Activated naive CD4-positive, alpha-beta T cell treated with anti-CD3 and anti-CD28 coated beads for 36 hours (primary cell): ENCODE measurements at regions of chr17 and their contacts with region 1.

Region 1: DNA sequence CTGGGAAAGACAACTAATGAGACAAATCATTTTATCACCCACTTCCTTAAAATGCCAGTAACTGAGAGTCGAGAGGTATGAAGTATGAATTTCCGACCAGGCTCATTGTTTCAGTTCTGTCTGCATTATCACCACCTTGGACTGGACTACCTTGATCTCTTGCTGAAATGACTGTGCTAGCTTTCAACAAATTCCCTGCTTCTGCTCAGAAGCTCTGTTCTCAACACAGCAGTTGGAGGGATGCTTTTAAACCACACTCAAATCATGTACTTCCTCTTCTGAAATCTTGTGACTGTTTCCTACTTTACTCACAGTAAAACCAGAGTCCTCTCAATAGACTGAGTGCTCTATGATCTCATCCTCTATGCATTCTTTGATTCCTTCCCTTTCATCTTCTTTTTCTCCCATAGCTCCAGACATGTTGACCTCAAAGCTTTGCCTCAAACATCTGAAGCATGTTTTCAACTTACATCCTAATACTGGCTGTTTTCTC is 195.8 kb downstream of the KCNJ2 start:
- DNase-seq: no peak
- H3K4me3 Mint-ChIP-seq: no peak overlapping the region
- H3K27ac Mint-ChIP-seq: no peak overlapping the region
- H3K4me1 Mint-ChIP-seq: no peaks in the 10 kb centered on the region
- H3K27me3 Mint-ChIP-seq: peaks cover 11% of the 10 kb centered on the region

Region 2: DNA sequence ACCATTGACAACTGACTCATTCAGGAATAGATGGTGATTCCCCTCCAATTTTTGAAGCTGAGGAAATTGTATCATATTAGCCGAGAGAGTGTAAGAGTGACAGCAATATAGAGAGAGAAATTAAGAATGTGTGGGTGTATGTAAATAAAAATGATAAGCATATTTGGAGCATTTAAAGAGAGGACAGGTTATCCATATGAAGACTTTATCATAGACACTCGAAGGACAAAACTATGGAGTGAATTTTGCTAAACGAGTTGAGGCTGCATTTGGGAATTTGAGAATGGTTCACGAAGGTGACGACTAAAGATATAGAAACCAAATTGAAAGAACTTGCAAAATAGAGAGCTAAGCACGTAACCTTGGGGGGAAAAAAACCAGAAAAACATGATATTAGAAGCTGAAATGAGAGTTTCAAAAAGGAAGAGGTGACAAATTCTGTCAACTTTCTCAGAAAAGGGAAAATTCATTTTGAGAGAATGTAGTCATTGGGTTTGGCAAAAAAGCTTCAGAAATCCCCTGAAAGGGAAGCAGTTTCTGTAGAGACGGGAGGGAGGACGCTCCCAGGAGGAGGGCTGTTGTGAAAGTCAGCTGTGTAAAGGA is 66.1 kb before region 1 on chr17:
- CTCF ChIA-PET with region 1: no interaction called
- intact Hi-C with region 1: loop called (anchors 1 kb)
- DNase-seq: no peak
- H3K4me3 Mint-ChIP-seq: no peak overlapping the region
- H3K27ac Mint-ChIP-seq: no peak overlapping the region
- H3K4me1 Mint-ChIP-seq: peaks cover 6% of the 10 kb centered on the region
- H3K27me3 Mint-ChIP-seq: peaks cover 2% of the 10 kb centered on the region

Region 3: GRCh38 chr17:70420861-70421449 is 55.8 kb after region 1 on chr17:
- CTCF ChIA-PET with region 1: no interaction called
- intact Hi-C with region 1: no loop called
- DNase-seq: no peak
- H3K4me3 Mint-ChIP-seq: no peak overlapping the region
- H3K27ac Mint-ChIP-seq: no peak overlapping the region
- H3K4me1 Mint-ChIP-seq: no peaks in the 10 kb centered on the region
- H3K27me3 Mint-ChIP-seq: no peaks in the 10 kb centered on the region